Transverse colon (tissue), 4 donors: ENCODE measurements at regions of chr12 and their contacts with region 1.

Region 1: DNA sequence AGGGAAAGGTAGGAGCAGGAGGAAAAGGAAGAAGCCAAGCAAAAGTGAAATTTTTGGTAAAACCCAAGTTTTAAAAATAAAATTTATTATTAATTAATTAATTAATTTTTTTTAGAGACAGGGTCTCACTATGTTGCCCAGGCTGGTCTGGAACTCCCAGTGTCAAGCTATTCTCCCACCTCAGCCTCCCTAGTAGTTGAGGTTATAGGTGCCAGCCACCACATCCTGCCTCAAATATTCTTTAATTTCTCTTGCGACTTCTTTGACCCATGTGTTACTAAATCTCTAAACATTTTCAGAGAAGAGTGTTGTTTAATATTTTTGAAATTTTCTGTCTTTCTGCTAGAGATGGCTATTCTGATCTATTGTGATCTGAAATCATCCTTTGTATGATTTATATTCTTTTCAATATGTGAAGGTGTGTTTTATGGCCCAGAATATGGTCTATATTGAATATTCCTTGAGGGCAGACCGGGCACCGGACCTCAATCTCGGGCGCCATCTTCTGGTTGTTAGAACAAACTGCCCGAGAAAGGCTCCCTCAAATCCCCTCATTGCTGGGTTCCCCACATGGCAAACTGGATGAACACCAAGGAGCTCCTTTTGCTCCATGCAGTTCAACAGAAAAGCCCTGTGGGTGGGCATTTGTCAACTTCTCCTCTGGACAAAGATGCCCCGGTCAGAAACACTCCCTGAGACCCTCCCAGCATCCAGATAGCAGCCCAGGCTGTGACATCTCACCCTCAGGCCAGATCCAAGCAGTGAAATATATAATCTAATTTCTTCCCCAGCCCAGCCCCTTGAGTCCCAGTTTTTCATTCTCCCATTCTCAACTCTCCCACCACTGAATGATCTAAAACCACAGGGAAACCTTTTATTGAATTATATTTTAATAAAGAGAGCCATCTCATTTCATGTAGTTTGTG is 110.5 kb downstream of the ASCL4 start:
- DNase-seq: peak; percentile 60
- H3K4me3 ChIP-seq: no peak overlapping the region
- H3K27ac ChIP-seq: no peak overlapping the region
- H3K4me1 ChIP-seq: peaks cover 0 to 5% (median 0%) of the 10 kb centered on the region in 4 donors
- H3K27me3 ChIP-seq: peaks cover 5% of the 10 kb centered on the region
- CTCF ChIP-seq: peak; percentile 52 to 72 (median 67)
- EP300 ChIP-seq: no peak
- POLR2A ChIP-seq: no peak

Region 2: GRCh38 chr12:107670999-107671643 is 213.9 kb before region 1 on chr12:
- in situ Hi-C with region 1: loop called (anchors 5 to 25 kb)
- intact Hi-C with region 1: loop called (anchors 5 kb)
- DNase-seq: peak; percentile 27
- H3K4me3 ChIP-seq: no peak overlapping the region
- H3K27ac ChIP-seq: no peak overlapping the region
- H3K4me1 ChIP-seq: no peaks in the 10 kb centered on the region
- H3K27me3 ChIP-seq: peaks cover 19% of the 10 kb centered on the region
- CTCF ChIP-seq: peak; percentile 26 to 49 (median 40)
- EP300 ChIP-seq: no peak
- POLR2A ChIP-seq: no peak

Region 3: DNA sequence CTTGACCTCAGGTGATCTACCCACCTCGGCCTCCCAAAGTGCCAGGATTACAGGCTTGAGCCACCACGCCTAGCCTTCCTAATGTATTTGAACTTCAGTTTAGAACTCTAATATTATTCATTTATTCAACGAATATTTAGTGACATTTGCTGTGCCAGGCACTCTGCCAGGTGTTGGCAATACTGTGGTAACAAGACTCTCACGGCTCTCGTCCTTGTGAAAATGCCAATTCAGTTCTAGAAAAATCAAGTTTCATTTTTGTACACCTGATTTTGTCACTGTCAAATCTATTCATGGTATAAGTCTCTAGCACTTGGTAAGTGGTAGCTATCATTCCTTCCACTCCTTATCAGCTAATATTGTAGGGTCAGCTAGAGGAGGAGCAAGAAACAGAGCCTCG is 205.7 kb before region 1 on chr12:
- in situ Hi-C with region 1: loop called (anchors 5 to 25 kb)
- intact Hi-C with region 1: loop called (anchors 5 kb)
- DNase-seq: no peak
- H3K4me3 ChIP-seq: no peak overlapping the region
- H3K27ac ChIP-seq: no peak overlapping the region
- H3K4me1 ChIP-seq: peaks cover 0 to 1% (median under 1%) of the 10 kb centered on the region in 4 donors
- H3K27me3 ChIP-seq: peaks cover 26% of the 10 kb centered on the region
- CTCF ChIP-seq: no peak
- EP300 ChIP-seq: no peak
- POLR2A ChIP-seq: no peak

Region 4: GRCh38 chr12:107685360-107686248 is 199.4 kb before region 1 on chr12 and contains the start of gene PWP1:
- in situ Hi-C with region 1: loop called in 1 of 4 experiments (anchors 25 kb)
- intact Hi-C with region 1: no loop called
- DNase-seq: peak; percentile 96
- H3K4me3 ChIP-seq: peak within 1 kb of the TSS; percentile 70 to 92 (median 82)
- H3K27ac ChIP-seq: peak within 1 kb of the TSS; percentile 84 to 91 (median 87)
- H3K4me1 ChIP-seq: peaks cover 4 to 22% (median 18%) of the 10 kb centered on the region in 4 donors
- H3K27me3 ChIP-seq: no peaks in the 10 kb centered on the region
- CTCF ChIP-seq: peak in 1 of 5 experiments; percentile 13
- EP300 ChIP-seq: no peak
- POLR2A ChIP-seq: peak; percentile 88
- total RNA-seq, gene PWP1: 29.9 to 49.7 (median 41.4) TPM

Region 5: GRCh38 chr12:107760809-107761501 is 124.1 kb before region 1 on chr12 and contains the start of gene PRDM4:
- in situ Hi-C with region 1: loop called in 2 of 4 experiments (anchors 10 kb)
- intact Hi-C with region 1: no loop called
- DNase-seq: peak; percentile 95
- H3K4me3 ChIP-seq: peak within 1 kb of the TSS; percentile 75 to 97 (median 88)
- H3K27ac ChIP-seq: peak within 1 kb of the TSS; percentile 83 to 91 (median 87)
- H3K4me1 ChIP-seq: peaks cover 10 to 32% (median 24%) of the 10 kb centered on the region in 4 donors
- H3K27me3 ChIP-seq: no peaks in the 10 kb centered on the region
- CTCF ChIP-seq: peak in 1 of 5 experiments; percentile 37
- EP300 ChIP-seq: no peak
- POLR2A ChIP-seq: peak; percentile 90
- total RNA-seq, gene PRDM4: 41.6 to 71.2 (median 42.4) TPM

Region 6: DNA sequence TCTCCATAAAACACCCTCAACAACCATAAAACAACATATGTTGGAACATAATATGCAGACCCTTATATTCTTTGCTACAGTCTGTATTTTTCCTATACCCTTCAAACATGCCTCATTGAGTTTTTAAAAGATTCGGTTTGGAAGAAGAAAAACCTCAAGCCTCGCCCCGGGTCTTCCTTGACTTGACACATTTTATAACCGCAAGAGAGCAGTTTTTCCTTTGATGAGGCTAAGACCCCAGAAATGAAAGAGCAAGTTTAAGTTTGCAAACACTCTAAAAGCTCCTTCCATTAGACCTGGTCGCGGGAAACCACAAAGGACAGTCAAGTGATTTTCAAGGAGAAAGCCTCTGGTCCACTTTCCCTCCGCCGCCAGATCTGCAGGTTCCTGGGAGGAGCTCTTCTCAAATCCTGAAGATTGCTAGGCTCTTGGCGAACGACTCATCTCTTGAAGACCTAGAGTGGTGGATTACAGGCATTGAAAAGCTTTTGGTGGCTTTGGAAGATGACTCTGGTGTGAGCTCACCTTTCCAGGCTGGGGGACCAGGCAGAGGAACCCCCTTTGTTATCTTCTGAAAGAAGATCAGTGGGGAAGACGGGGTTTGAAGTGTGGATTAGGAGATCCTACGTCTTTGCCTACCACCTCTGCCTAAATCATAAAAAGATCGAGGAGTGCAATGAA is 110.5 kb before region 1 on chr12 and contains the start of gene ASCL4:
- in situ Hi-C with region 1: loop called in 2 of 4 experiments (anchors 5 to 10 kb)
- intact Hi-C with region 1: no loop called
- DNase-seq: no peak
- H3K4me3 ChIP-seq: peak within 1 kb of the TSS in 1 of 4 donors; percentile 29
- H3K27ac ChIP-seq: no peak within 1 kb of the TSS
- H3K4me1 ChIP-seq: peaks cover 0 to 9% (median 0%) of the 10 kb centered on the region in 4 donors
- H3K27me3 ChIP-seq: peaks cover 64% of the 10 kb centered on the region
- CTCF ChIP-seq: no peak
- EP300 ChIP-seq: no peak
- POLR2A ChIP-seq: no peak
- total RNA-seq, gene ASCL4: not detected